B cell (primary cell): ENCODE measurements at regions of chr14 and their contacts with region 1.

Region 1: DNA sequence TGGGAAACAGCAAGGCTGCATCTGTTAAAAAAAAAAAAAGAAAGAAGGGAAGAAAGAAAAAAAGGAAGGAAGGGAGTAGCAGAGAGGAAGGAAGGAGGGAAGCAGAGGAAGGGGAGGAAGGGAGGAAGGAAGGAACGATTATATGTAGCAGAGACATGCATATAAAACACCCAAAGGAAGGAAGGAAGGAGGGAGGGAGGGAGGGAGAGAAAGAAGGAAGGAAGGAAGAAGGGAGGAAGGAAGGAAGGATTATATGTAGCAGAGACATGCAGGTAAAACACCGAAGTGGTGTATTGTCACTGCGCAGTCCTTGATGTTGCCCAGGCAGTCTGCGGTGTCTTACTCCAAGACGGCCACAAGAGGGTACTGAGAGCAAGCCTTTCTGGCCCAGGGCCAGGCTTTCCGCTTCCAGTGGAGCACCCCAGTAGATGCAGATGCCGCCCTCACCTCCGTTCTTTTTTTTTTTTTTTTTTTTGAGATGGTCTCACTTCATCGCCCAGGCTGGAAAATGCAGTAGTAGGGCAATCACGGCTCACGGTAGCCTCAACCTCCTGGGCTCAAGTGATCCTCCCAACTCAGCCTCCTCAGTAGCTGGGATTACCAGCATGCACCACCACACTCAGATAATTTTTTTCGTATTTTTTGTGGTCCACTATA is 5.8 kb upstream of the LBHD2 start:
- DNase-seq: peak; percentile 86
- ATAC-seq: peak; percentile 71
- H3K4me3 ChIP-seq: no peak overlapping the region
- H3K4me3 Mint-ChIP-seq: no peak overlapping the region
- H3K27ac ChIP-seq: no peak overlapping the region
- H3K27ac Mint-ChIP-seq: no peak overlapping the region
- H3K4me1 ChIP-seq: peaks cover 10 to 22% of the 10 kb centered on the region in 2 donors
- H3K4me1 Mint-ChIP-seq: peaks cover 5% of the 10 kb centered on the region
- H3K27me3 ChIP-seq: peaks cover 0 to 11% (median 5%) of the 10 kb centered on the region in 4 experiments
- H3K27me3 Mint-ChIP-seq: no peaks in the 10 kb centered on the region
- CTCF ChIP-seq: peak; percentile 80

Region 2: DNA sequence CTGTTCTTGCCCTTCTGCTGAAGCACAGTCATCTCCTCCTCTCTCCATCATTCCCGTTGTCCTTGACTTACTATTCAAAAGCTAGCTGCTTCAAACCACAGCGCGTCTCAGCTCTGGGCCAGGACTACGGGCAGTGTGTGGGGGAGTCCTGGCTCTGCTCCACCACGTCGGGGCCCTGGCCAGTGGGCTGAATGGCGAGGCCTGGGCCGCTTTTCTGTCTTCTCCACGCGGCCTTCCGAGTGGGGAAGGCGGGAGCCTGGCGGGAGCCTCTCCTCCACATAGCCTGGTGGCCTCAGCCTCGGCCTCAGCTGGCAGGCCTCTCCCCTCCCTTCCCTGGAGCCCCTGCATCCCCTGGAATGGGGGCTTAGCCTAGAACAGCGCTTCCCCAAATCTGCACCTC is 585.1 kb before region 1 on chr14:
- CTCF ChIA-PET with region 1: no interaction called
- POLR2A ChIA-PET with region 1: no interaction called
- intact Hi-C with region 1: no loop called
- DNase-seq: no peak
- ATAC-seq: no peak
- H3K4me3 ChIP-seq: no peak overlapping the region
- H3K4me3 Mint-ChIP-seq: no peak overlapping the region
- H3K27ac ChIP-seq: no peak overlapping the region
- H3K27ac Mint-ChIP-seq: no peak overlapping the region
- H3K4me1 ChIP-seq: no peaks in the 10 kb centered on the region
- H3K4me1 Mint-ChIP-seq: no peaks in the 10 kb centered on the region
- H3K27me3 ChIP-seq: no peaks in the 10 kb centered on the region
- H3K27me3 Mint-ChIP-seq: no peaks in the 10 kb centered on the region
- CTCF ChIP-seq: no peak

Region 3: GRCh38 chr14:103057365-103058096 is 20.7 kb before region 1 on chr14 and contains the start of gene CDC42BPB:
- CTCF ChIA-PET with region 1: interaction called, 7 read pairs
- POLR2A ChIA-PET with region 1: no interaction called
- intact Hi-C with region 1: loop called (anchors 1 kb)
- DNase-seq: peak; percentile 88
- ATAC-seq: peak; percentile 87
- H3K4me3 ChIP-seq: peak within 1 kb of the TSS; percentile 26 to 73 (median 67)
- H3K4me3 Mint-ChIP-seq: peak within 1 kb of the TSS; percentile 85
- H3K27ac ChIP-seq: no peak within 1 kb of the TSS
- H3K27ac Mint-ChIP-seq: peak within 1 kb of the TSS; percentile 71
- H3K4me1 ChIP-seq: peaks cover 16 to 19% of the 10 kb centered on the region in 2 donors
- H3K4me1 Mint-ChIP-seq: peaks cover 31% of the 10 kb centered on the region
- H3K27me3 ChIP-seq: peaks cover 0 to 7% (median 0%) of the 10 kb centered on the region in 4 experiments
- H3K27me3 Mint-ChIP-seq: no peaks in the 10 kb centered on the region
- CTCF ChIP-seq: no peak
- total RNA-seq, gene CDC42BPB: 52.5 and 59.2 TPM in 2 replicates

Region 4: DNA sequence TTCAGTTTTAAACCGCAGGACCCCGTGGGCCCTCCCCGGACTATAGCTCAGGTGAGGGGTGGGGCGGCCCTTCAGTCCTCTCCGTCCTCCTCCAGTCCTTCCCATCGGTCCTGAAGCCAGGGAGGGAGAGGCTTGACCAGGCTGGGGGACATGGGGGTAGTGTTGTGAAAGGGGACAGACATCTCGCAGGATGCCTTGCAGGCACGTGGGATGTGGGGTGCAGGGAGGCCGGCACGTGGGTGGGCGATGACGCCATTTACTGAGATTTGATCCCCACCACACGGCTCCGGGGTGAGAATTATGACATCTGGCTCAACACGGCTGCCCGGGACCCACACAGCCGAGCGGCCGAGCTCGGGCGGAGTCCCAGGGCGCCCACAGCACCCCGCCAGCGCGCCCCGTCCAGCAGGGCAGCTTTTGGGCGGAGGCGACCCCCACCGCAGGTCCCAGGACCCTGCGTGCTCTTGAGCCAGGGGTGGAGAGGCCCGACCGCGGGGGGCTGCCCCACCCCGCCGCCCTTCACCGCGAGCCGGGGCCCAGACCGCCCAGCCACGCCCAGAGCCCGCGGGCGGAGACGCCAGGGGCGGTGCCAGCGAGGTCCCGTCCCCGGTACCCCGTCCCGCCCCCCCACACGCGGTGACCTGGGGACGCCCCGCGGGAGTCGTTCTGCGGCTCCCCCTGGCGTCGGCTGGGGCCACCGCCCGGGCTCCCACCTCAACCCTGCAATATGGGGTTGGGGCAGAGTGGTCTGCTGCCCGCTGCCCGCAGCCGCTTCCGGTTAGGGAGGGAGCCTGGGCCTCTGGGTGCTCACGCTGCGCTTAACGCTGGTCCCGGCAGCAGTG is 13.0 kb after region 1 on chr14:
- CTCF ChIA-PET with region 1: interaction called, 10 read pairs
- POLR2A ChIA-PET with region 1: no interaction called
- intact Hi-C with region 1: loop called (anchors 1 kb)
- DNase-seq: peak; percentile 87
- ATAC-seq: peak; percentile 97
- H3K4me3 ChIP-seq: peak overlapping the region in 4 of 5 experiments; percentile 24 to 56 (median 48)
- H3K4me3 Mint-ChIP-seq: peak overlapping the region; percentile 74
- H3K27ac ChIP-seq: no peak overlapping the region
- H3K27ac Mint-ChIP-seq: no peak overlapping the region
- H3K4me1 ChIP-seq: peaks cover 10 to 15% of the 10 kb centered on the region in 2 donors
- H3K4me1 Mint-ChIP-seq: peaks cover 2% of the 10 kb centered on the region
- H3K27me3 ChIP-seq: peaks cover 0 to 21% (median 1%) of the 10 kb centered on the region in 4 experiments
- H3K27me3 Mint-ChIP-seq: no peaks in the 10 kb centered on the region
- CTCF ChIP-seq: peak; percentile 83

Region 5: GRCh38 chr14:103164786-103165185 is 86.6 kb after region 1 on chr14:
- CTCF ChIA-PET with region 1: no interaction called
- POLR2A ChIA-PET with region 1: no interaction called
- intact Hi-C with region 1: no loop called
- DNase-seq: no peak
- ATAC-seq: no peak
- H3K4me3 ChIP-seq: no peak overlapping the region
- H3K4me3 Mint-ChIP-seq: no peak overlapping the region
- H3K27ac ChIP-seq: no peak overlapping the region
- H3K27ac Mint-ChIP-seq: no peak overlapping the region
- H3K4me1 ChIP-seq: no peaks in the 10 kb centered on the region
- H3K4me1 Mint-ChIP-seq: no peaks in the 10 kb centered on the region
- H3K27me3 ChIP-seq: peaks cover 0 to 11% (median 0%) of the 10 kb centered on the region in 4 experiments
- H3K27me3 Mint-ChIP-seq: peaks cover 22% of the 10 kb centered on the region
- CTCF ChIP-seq: no peak

Region 6: GRCh38 chr14:103177376-103177775 is 99.2 kb after region 1 on chr14:
- CTCF ChIA-PET with region 1: no interaction called
- POLR2A ChIA-PET with region 1: no interaction called
- intact Hi-C with region 1: no loop called
- DNase-seq: no peak
- ATAC-seq: no peak
- H3K4me3 ChIP-seq: no peak overlapping the region
- H3K4me3 Mint-ChIP-seq: no peak overlapping the region
- H3K27ac ChIP-seq: no peak overlapping the region
- H3K27ac Mint-ChIP-seq: no peak overlapping the region
- H3K4me1 ChIP-seq: no peaks in the 10 kb centered on the region
- H3K4me1 Mint-ChIP-seq: no peaks in the 10 kb centered on the region
- H3K27me3 ChIP-seq: no peaks in the 10 kb centered on the region
- H3K27me3 Mint-ChIP-seq: peaks cover 19% of the 10 kb centered on the region
- CTCF ChIP-seq: no peak

Region 7: GRCh38 chr14:103546652-103547454 is 468.6 kb after region 1 on chr14:
- CTCF ChIA-PET with region 1: no interaction called
- POLR2A ChIA-PET with region 1: no interaction called
- intact Hi-C with region 1: loop called (anchors 5 kb)
- DNase-seq: peak; percentile 82
- ATAC-seq: peak; percentile 83
- H3K4me3 ChIP-seq: no peak overlapping the region
- H3K4me3 Mint-ChIP-seq: no peak overlapping the region
- H3K27ac ChIP-seq: no peak overlapping the region
- H3K27ac Mint-ChIP-seq: no peak overlapping the region
- H3K4me1 ChIP-seq: peaks cover 0 to 6% of the 10 kb centered on the region in 2 donors
- H3K4me1 Mint-ChIP-seq: peaks cover 4% of the 10 kb centered on the region
- H3K27me3 ChIP-seq: peaks cover 0 to 22% (median 2%) of the 10 kb centered on the region in 4 experiments
- H3K27me3 Mint-ChIP-seq: no peaks in the 10 kb centered on the region
- CTCF ChIP-seq: peak; percentile 95